SK-N-SH (cell line): ENCODE measurements at regions of chr6 and their contacts with region 1.

Region 1: GRCh38 chr6:49625140-49625539 is 11.5 kb downstream of the RHAG start:
- DNase-seq: no peak
- H3K4me3 ChIP-seq: no peak overlapping the region
- H3K27ac ChIP-seq: no peak overlapping the region
- H3K4me1 ChIP-seq: no peaks in the 10 kb centered on the region
- H3K27me3 ChIP-seq: peaks cover 14% of the 10 kb centered on the region
- CTCF ChIP-seq: no peak
- EP300 ChIP-seq: no peak
- RAD21 ChIP-seq: no peak

Region 2: DNA sequence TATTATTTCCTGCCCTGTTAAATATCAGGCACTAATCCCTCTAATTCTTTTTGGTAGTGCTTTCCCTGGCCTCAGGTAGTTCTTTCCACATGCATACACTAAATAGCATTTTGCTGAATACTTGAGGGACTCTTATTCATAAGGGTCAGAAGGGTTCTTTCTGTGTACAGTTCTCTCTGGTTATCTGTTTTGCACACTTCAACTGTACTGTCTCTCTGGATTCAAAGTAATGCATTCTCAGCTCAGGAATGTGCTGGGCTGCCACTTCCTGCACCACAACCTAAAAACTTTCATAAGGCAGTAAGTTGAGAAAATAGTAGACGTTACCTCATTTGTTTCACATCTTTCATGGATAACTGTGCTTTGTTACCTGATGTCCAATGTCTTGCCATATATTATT is 42.6 kb before region 1 on chr6:
- CTCF ChIA-PET with region 1: no interaction called
- POLR2A ChIA-PET with region 1: no interaction called
- DNase-seq: no peak
- H3K4me3 ChIP-seq: no peak overlapping the region
- H3K27ac ChIP-seq: no peak overlapping the region
- H3K4me1 ChIP-seq: no peaks in the 10 kb centered on the region
- H3K27me3 ChIP-seq: no peaks in the 10 kb centered on the region; the same call in 1 of the 2 replicates
- CTCF ChIP-seq: no peak
- EP300 ChIP-seq: no peak
- RAD21 ChIP-seq: no peak

Region 3: GRCh38 chr6:49849213-49849907 is 224.2 kb after region 1 on chr6:
- CTCF ChIA-PET with region 1: interaction called, 17 read pairs
- POLR2A ChIA-PET with region 1: no interaction called
- DNase-seq: peak; percentile 15
- H3K4me3 ChIP-seq: no peak overlapping the region
- H3K27ac ChIP-seq: no peak overlapping the region
- H3K4me1 ChIP-seq: no peaks in the 10 kb centered on the region
- H3K27me3 ChIP-seq: 0 out of 2 replicates have a peak, but pooled peaks cover 5% of the 10 kb centered on the region
- CTCF ChIP-seq: peak; percentile 74
- EP300 ChIP-seq: no peak
- RAD21 ChIP-seq: peak; percentile 73